ENCODE measurements at regions of chr6 and their contacts with region 1.

Region 1: DNA sequence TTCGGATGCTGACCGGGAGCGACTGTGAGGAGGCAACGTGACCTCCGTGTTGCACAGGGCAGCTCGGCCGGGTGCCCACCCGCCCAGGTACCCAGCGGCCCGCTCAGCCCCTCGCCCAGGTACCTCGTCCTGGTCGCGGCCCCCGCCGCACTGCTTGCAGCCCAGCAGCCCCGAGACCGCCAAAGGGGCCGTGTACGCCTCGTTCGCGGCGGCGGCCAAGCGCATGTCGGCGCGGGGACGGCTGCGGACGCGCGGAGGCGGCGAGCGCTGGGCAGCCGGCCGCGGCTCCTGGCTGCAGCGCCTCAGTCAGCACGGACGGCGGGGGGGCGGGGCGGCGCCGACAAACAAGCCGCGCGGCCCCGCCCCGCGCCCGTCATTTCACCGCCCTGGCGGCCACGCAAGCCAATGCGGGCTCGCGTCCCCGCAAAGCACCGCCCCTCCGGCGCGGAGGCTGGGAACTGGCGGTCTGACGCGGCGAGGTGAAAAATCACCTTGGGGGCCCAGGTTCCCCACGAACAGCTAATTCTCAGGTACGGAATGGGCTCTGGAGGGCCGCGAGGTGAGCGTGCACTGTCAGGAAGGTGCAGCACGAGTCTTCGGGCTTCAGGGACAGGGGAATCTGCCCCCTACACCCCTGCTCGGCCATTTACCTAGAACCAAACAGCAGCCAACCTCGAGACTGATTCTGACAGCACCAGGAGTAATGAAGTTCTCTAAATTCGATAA is 85.2 kb downstream of the SESN1 start:
- DNase-seq: peak; percentile 89
- H3K4me3 Mint-ChIP-seq: peak overlapping the region; percentile 93
- H3K27ac Mint-ChIP-seq: peak overlapping the region; percentile 94
- H3K4me1 Mint-ChIP-seq: peaks cover 24% of the 10 kb centered on the region
- H3K27me3 Mint-ChIP-seq: no peaks in the 10 kb centered on the region
- CTCF ChIP-seq: no peak

Region 2: DNA sequence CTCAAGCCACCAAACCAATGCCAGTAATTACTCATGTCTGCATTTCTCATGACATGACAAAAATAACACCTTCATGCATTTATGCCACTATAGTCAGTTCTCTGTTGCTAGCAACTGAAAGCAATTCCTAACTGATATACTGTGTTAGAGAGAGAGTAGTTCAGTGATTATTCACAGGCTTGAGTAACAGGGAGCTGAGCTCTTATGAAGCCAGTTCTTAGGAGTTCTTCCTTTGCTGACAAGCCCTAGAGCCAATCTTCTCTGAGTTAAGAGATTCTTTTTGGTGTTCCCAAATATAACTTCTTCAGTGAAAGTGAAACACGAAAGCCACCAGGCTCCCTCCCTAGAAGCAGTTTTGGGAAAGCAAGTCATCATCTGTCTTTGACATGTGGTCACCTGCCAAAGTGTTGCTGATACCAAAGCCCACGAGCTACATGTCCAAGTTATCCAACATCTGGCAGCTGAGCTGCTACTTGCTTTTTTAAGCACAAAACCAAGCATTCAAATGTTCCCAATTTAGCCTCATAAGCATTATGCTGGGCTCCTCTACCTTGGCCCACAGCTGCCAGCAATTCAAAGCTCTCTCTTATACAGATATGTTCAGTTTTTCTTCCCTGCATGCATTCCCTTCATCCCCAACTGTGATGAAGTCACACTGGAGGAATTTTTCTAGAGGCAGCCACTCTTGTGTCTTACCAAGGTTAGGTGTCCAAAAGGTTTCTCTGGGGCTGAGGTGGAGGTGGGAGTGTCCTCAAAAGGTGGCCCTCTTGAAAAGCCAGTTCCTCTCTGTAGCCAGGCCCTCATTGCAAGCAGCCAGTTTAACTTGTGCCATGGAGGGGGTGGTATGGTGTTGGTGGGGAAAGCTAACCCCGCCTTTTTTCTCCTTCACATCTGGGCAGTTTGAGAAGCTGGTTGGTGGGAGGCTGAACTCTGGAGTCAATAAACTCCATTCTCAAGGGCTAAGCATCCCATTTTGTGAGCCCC is 253.8 kb before region 1 on chr6:
- CTCF ChIA-PET with region 1: no interaction called
- POLR2A ChIA-PET with region 1: no interaction called
- intact Hi-C with region 1: no loop called
- DNase-seq: no peak
- H3K4me3 Mint-ChIP-seq: no peak overlapping the region
- H3K27ac Mint-ChIP-seq: no peak overlapping the region
- H3K4me1 Mint-ChIP-seq: no peaks in the 10 kb centered on the region
- H3K27me3 Mint-ChIP-seq: no peaks in the 10 kb centered on the region
- CTCF ChIP-seq: no peak

Region 3: GRCh38 chr6:109050012-109050411 is 40.6 kb after region 1 on chr6:
- CTCF ChIA-PET with region 1: interaction called, 11 read pairs
- POLR2A ChIA-PET with region 1: interaction called, 556 read pairs
- intact Hi-C with region 1: no loop called
- DNase-seq: peak; percentile 41
- H3K4me3 Mint-ChIP-seq: no peak overlapping the region
- H3K27ac Mint-ChIP-seq: peak overlapping the region; percentile 70
- H3K4me1 Mint-ChIP-seq: peaks cover 25% of the 10 kb centered on the region
- H3K27me3 Mint-ChIP-seq: no peaks in the 10 kb centered on the region
- CTCF ChIP-seq: no peak

Region 4: GRCh38 chr6:109059571-109060021 is 50.2 kb after region 1 on chr6:
- CTCF ChIA-PET with region 1: interaction called, 7 read pairs
- POLR2A ChIA-PET with region 1: interaction called, 556 read pairs
- intact Hi-C with region 1: loop called (anchors 2 kb)
- DNase-seq: peak; percentile 71
- H3K4me3 Mint-ChIP-seq: peak overlapping the region; percentile 61
- H3K27ac Mint-ChIP-seq: peak overlapping the region; percentile 96
- H3K4me1 Mint-ChIP-seq: peaks cover 52% of the 10 kb centered on the region
- H3K27me3 Mint-ChIP-seq: no peaks in the 10 kb centered on the region
- CTCF ChIP-seq: peak; percentile 56